AG04450 (cell line): ENCODE measurements at regions of chr6 and their contacts with region 1.

Region 1: GRCh38 chr6:27188885-27189418 is 58.5 kb upstream of the PRSS16 start:
- DNase-seq: peak; percentile 59
- H3K4me3 ChIP-seq: peak overlapping the region; percentile 81
- H3K27ac ChIP-seq: peak overlapping the region; percentile 84
- H3K27me3 ChIP-seq: no peaks in the 10 kb centered on the region
- CTCF ChIP-seq: peak; percentile 74

Region 2: GRCh38 chr6:27146706-27147505 is 42.0 kb before region 1 on chr6:
- CTCF ChIA-PET with region 1: no interaction called
- POLR2A ChIA-PET with region 1: no interaction called
- DNase-seq: peak; percentile 99
- H3K4me3 ChIP-seq: peak overlapping the region; percentile 73
- H3K27ac ChIP-seq: peak overlapping the region; percentile 98
- H3K27me3 ChIP-seq: no peaks in the 10 kb centered on the region
- CTCF ChIP-seq: no peak

Region 3: GRCh38 chr6:27177485-27178406 is 11.2 kb before region 1 on chr6:
- CTCF ChIA-PET with region 1: interaction called, 5 read pairs
- POLR2A ChIA-PET with region 1: interaction called, 17 read pairs
- DNase-seq: peak; percentile 85
- H3K4me3 ChIP-seq: peak overlapping the region; percentile 95
- H3K27ac ChIP-seq: peak overlapping the region; percentile 96
- H3K27me3 ChIP-seq: peaks cover 4% of the 10 kb centered on the region
- CTCF ChIP-seq: peak; percentile 52